Activated CD4-positive, alpha-beta memory T cell treated with anti-CD3 and anti-CD28 coated beads, Interleukin-2, amount 10 ng/mL, durations not matched to agents 7 days and 5 days (primary cell): ENCODE measurements at regions of chr18 and their contacts with region 1.

Region 1: DNA sequence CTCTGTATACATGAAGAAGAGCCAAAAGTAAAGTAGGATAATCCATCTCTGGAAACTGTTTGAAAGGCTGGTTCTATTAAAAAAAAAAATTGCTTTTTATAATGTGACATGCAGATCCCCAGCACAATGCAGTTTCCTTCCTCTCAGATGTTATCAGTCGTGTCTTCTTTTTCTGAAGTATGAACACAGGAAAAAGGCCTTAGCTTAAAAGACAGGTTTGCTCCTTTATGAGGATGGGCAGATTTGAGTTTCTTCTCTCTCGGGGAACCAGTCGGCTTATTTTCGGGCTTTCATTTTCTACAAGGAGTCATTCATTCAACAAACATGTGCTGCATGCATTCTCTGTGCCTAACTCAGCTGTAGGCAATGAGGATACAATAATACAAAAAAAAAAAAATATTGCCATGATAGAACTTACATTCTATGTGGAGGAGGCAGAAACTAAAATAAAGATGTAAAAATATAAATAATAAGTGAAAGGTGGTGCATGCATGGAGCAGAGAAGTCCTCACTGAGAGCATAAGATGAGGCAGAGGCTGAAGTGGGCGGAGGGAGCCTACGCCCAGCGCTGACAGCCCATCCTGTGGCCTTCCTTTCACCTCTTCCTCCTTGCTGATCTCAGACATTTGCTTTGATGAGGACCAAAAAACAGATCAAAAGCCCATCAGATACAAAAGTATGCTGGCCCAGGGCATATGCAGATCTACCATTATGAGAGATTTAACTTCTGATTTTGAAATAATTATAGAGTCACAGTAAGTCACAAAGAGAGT is at the start of gene CD226:
- DNase-seq: peak; percentile 60
- H3K4me3 Mint-ChIP-seq: no peak within 1 kb of the TSS
- H3K27ac Mint-ChIP-seq: no peak within 1 kb of the TSS
- H3K4me1 Mint-ChIP-seq: peaks cover 48% of the 10 kb centered on the region
- H3K27me3 Mint-ChIP-seq: no peaks in the 10 kb centered on the region
- total RNA-seq, gene CD226: 102 to 111 TPM

Region 2: DNA sequence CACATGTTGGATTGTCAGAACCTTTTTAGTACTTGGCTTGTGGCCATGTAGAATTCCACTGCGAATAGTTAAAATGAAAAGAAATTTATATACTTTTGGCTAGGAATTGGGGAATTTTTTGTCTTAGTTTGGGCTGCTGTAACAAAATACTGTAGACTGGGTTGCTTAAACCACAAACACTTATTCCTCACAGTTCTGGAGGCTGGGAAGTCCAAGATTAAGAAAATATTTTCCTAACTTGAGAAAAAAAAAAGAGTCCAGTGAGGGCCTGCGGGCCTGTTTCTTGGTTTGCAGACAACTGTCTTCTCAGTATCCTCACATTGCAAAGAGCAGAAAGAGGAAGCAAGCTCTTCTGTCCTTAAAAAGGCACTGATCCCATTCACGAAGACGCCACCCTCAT is 81.8 kb before region 1 on chr18:
- CTCF ChIA-PET with region 1: no interaction called
- POLR2A ChIA-PET with region 1: no interaction called
- DNase-seq: no peak
- H3K4me3 Mint-ChIP-seq: no peak overlapping the region
- H3K27ac Mint-ChIP-seq: no peak overlapping the region
- H3K4me1 Mint-ChIP-seq: no peaks in the 10 kb centered on the region
- H3K27me3 Mint-ChIP-seq: no peaks in the 10 kb centered on the region

Region 3: DNA sequence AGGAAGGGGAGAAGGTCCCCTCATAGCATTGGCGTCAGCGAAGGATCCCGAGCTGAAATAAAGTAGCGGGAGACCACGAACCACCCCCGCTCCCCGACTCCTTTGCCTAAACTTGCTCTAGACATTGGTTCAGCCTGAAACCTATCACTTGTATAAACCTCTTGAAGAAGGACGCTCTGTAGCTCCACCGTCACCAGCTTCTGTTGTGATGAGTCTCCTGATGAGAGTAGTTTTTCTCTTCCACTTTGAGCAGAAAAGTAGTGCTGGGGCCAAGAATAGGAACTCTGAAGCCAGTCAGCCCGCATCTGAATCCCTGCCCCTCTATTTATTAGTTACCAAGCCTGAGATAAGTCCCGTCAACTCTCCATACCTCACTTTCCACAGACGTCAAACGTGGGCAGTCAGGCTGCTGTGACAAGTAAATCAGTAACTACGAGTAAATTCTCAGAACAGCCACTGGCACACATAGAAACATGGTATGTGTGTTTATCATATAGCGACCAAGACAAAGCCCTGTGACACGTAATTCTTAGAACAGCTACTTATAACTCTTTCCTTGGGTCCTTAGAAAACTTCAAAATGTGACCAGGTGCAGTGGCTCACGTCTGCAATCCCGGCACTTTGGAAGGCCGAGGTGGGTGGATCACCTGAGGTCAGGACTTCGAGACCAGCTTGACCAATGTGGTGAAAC is 61.6 kb before region 1 on chr18:
- CTCF ChIA-PET with region 1: no interaction called
- POLR2A ChIA-PET with region 1: interaction called, 13 read pairs
- DNase-seq: peak; percentile 71
- H3K4me3 Mint-ChIP-seq: peak overlapping the region; percentile 60
- H3K27ac Mint-ChIP-seq: peak overlapping the region; percentile 90
- H3K4me1 Mint-ChIP-seq: peaks cover 78% of the 10 kb centered on the region
- H3K27me3 Mint-ChIP-seq: no peaks in the 10 kb centered on the region

Region 4: GRCh38 chr18:69958422-69958821 is 10.9 kb after region 1 on chr18:
- CTCF ChIA-PET with region 1: interaction called, 8 read pairs
- POLR2A ChIA-PET with region 1: interaction called, 101 read pairs
- DNase-seq: peak; percentile 52
- H3K4me3 Mint-ChIP-seq: no peak overlapping the region
- H3K27ac Mint-ChIP-seq: no peak overlapping the region
- H3K4me1 Mint-ChIP-seq: peaks cover 15% of the 10 kb centered on the region
- H3K27me3 Mint-ChIP-seq: no peaks in the 10 kb centered on the region